Activated CD4-positive, alpha-beta memory T cell treated with anti-CD3 and anti-CD28 coated beads, Interleukin-2, amount 10 ng/mL, durations not matched to agents 7 days and 5 days (primary cell): ENCODE measurements at regions of chr4 and their contacts with region 1.

Region 1: GRCh38 chr4:83259586-83259985 is 25.0 kb downstream of the COQ2 start:
- DNase-seq: no peak
- H3K4me3 Mint-ChIP-seq: no peak overlapping the region
- H3K27ac Mint-ChIP-seq: no peak overlapping the region
- H3K4me1 Mint-ChIP-seq: peaks cover 5% of the 10 kb centered on the region
- H3K27me3 Mint-ChIP-seq: no peaks in the 10 kb centered on the region

Region 2: GRCh38 chr4:82984459-82984858 is 275.1 kb before region 1 on chr4:
- CTCF ChIA-PET with region 1: no interaction called
- POLR2A ChIA-PET with region 1: no interaction called
- DNase-seq: peak; percentile 26
- H3K4me3 Mint-ChIP-seq: no peak overlapping the region
- H3K27ac Mint-ChIP-seq: no peak overlapping the region
- H3K4me1 Mint-ChIP-seq: peaks cover 21% of the 10 kb centered on the region
- H3K27me3 Mint-ChIP-seq: no peaks in the 10 kb centered on the region

Region 3: DNA sequence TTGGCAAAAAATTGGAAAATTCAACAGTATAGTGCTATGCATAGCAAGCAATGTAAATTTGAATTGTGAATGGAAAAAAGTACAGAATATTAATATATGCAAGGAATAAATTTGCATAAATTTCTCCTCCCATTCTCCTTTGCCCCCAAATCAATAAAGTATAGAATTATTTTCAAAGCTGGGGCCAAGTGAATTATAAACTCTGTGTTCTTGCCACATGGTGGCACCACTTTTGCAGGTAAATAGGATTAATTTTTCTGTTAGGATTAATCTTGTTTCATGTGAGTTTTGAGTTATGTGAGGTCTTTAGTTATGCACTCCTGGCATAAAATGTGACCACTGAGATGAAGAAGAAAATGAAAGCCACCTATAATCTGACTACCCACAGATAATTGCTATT is 204.7 kb before region 1 on chr4:
- CTCF ChIA-PET with region 1: interaction called, 13 read pairs
- POLR2A ChIA-PET with region 1: no interaction called
- DNase-seq: no peak
- H3K4me3 Mint-ChIP-seq: no peak overlapping the region
- H3K27ac Mint-ChIP-seq: no peak overlapping the region
- H3K4me1 Mint-ChIP-seq: no peaks in the 10 kb centered on the region
- H3K27me3 Mint-ChIP-seq: no peaks in the 10 kb centered on the region